H1 (cell line): ENCODE measurements at regions of chr22 and their contacts with region 1.

Region 1: DNA sequence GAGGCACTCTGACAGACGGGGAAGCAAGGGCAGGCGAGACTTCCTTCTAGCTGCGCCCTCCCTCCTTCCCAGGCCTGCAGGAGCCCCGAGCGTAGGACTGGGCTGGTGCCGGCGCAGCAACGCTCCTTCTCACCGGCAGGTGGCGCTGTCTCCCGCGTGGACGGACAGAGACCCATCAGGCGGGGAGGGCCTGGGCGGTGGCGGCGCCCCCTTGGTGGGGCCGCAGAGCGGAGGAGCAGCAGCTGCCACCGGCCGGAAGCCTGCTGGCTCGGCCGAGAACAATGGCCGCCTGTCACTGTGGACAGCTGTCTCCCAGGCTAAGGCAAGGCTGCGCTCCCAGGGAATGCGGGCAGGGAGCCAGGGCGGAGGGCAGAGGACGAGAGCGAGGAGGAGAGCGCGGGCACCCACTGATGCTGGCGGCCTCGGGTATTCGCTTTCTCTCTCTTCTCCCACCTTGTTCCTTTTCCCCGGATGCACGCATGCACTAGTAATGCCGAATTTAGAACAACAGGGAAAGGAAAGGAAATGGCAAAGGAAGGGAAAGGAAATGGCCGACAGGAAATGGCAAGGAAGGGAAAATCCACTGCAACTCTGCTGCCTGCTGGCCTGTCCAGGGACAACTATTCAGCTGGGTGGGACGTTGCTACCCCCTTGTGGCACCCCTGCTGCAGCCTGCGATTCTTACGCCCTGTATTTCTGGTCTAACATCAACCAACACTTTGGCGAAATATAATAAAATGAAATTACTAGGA is 14.4 kb downstream of the PPM1F start:
- DNase-seq: peak; percentile 75 to 99
- H3K4me3 ChIP-seq: peak overlapping the region; percentile 19 to 78 (median 60)
- H3K27ac ChIP-seq: peak overlapping the region; percentile 53; the same call in 1 of the 2 replicates
- H3K4me1 ChIP-seq: peaks cover 0 to 7% (median under 1%) of the 10 kb centered on the region in 4 experiments; a peak in 4 of 7 replicates
- H3K27me3 ChIP-seq: no peaks in the 10 kb centered on the region
- CTCF ChIP-seq: peak; percentile 99
- EP300 ChIP-seq: peak in 1 of 2 experiments; percentile 55; a peak in 1 of 3 replicates
- POLR2A ChIP-seq: no peak
- RAD21 ChIP-seq: peak; percentile 88 to 92

Region 2: DNA sequence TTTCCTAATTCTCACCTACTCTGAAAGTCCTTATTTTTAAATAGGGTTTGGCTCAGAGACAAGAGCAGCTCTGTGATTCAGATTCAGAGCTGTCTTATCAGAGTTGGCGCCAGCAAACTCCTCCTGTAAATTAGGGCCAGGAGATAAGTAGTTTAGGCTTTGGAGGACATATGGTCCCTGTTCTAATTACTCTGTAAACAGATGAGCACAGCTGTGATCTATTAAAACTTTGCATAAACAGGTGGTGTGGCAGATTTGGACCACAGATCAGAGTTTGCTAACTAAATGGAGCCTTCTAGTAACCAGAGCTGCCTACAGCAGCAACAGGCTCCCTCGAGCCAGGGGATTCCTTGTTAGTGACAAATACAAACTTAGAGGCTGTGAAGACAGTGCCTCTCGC is 230.6 kb before region 1 on chr22:
- CTCF ChIA-PET with region 1: interaction called, 11 read pairs
- POLR2A ChIA-PET with region 1: no interaction called
- DNase-seq: no peak
- H3K4me3 ChIP-seq: no peak overlapping the region
- H3K27ac ChIP-seq: no peak overlapping the region
- H3K4me1 ChIP-seq: no peaks in the 10 kb centered on the region
- H3K27me3 ChIP-seq: no peaks in the 10 kb centered on the region
- CTCF ChIP-seq: no peak
- EP300 ChIP-seq: no peak
- POLR2A ChIP-seq: no peak
- RAD21 ChIP-seq: no peak

Region 3: GRCh38 chr22:21771631-21771976 is 166.6 kb before region 1 on chr22:
- CTCF ChIA-PET with region 1: interaction called, 22 read pairs
- POLR2A ChIA-PET with region 1: no interaction called
- DNase-seq: no peak
- H3K4me3 ChIP-seq: no peak overlapping the region
- H3K27ac ChIP-seq: no peak overlapping the region
- H3K4me1 ChIP-seq: no peaks in the 10 kb centered on the region
- H3K27me3 ChIP-seq: no peaks in the 10 kb centered on the region
- CTCF ChIP-seq: no peak
- EP300 ChIP-seq: no peak
- POLR2A ChIP-seq: no peak
- RAD21 ChIP-seq: no peak

Region 4: GRCh38 chr22:21778705-21779363 is 159.4 kb before region 1 on chr22:
- CTCF ChIA-PET with region 1: interaction called, 22 read pairs
- POLR2A ChIA-PET with region 1: no interaction called
- DNase-seq: no peak
- H3K4me3 ChIP-seq: no peak overlapping the region
- H3K27ac ChIP-seq: no peak overlapping the region
- H3K4me1 ChIP-seq: no peaks in the 10 kb centered on the region
- H3K27me3 ChIP-seq: no peaks in the 10 kb centered on the region
- CTCF ChIP-seq: no peak
- EP300 ChIP-seq: no peak
- POLR2A ChIP-seq: no peak
- RAD21 ChIP-seq: no peak

Region 5: GRCh38 chr22:21917181-21917958 is 20.9 kb before region 1 on chr22:
- CTCF ChIA-PET with region 1: interaction called, 59 read pairs
- POLR2A ChIA-PET with region 1: interaction called, 8 read pairs
- DNase-seq: no peak
- H3K4me3 ChIP-seq: no peak overlapping the region
- H3K27ac ChIP-seq: 0 out of 2 replicates have a peak overlapping the region, but pooled peaks have one; percentile 5
- H3K4me1 ChIP-seq: peaks cover 13 to 40% (median 30%) of the 10 kb centered on the region in 4 experiments
- H3K27me3 ChIP-seq: no peaks in the 10 kb centered on the region; a peak in 1 of 7 replicates
- CTCF ChIP-seq: no peak
- EP300 ChIP-seq: no peak
- POLR2A ChIP-seq: no peak
- RAD21 ChIP-seq: peak; percentile 15 to 28; a peak in 2 of 4 replicates

Region 6: GRCh38 chr22:21927174-21927823 is 10.9 kb before region 1 on chr22:
- CTCF ChIA-PET with region 1: interaction called, 59 read pairs
- POLR2A ChIA-PET with region 1: interaction called, 8 read pairs
- DNase-seq: peak in 1 of 2 experiments; percentile 62
- H3K4me3 ChIP-seq: no peak overlapping the region
- H3K27ac ChIP-seq: 0 out of 2 replicates have a peak overlapping the region, but pooled peaks have one; percentile 30
- H3K4me1 ChIP-seq: peaks cover 0 to 33% (median 26%) of the 10 kb centered on the region in 4 experiments; a peak in 6 of 7 replicates
- H3K27me3 ChIP-seq: no peaks in the 10 kb centered on the region
- CTCF ChIP-seq: no peak
- EP300 ChIP-seq: no peak
- POLR2A ChIP-seq: no peak
- RAD21 ChIP-seq: no peak

Region 7: DNA sequence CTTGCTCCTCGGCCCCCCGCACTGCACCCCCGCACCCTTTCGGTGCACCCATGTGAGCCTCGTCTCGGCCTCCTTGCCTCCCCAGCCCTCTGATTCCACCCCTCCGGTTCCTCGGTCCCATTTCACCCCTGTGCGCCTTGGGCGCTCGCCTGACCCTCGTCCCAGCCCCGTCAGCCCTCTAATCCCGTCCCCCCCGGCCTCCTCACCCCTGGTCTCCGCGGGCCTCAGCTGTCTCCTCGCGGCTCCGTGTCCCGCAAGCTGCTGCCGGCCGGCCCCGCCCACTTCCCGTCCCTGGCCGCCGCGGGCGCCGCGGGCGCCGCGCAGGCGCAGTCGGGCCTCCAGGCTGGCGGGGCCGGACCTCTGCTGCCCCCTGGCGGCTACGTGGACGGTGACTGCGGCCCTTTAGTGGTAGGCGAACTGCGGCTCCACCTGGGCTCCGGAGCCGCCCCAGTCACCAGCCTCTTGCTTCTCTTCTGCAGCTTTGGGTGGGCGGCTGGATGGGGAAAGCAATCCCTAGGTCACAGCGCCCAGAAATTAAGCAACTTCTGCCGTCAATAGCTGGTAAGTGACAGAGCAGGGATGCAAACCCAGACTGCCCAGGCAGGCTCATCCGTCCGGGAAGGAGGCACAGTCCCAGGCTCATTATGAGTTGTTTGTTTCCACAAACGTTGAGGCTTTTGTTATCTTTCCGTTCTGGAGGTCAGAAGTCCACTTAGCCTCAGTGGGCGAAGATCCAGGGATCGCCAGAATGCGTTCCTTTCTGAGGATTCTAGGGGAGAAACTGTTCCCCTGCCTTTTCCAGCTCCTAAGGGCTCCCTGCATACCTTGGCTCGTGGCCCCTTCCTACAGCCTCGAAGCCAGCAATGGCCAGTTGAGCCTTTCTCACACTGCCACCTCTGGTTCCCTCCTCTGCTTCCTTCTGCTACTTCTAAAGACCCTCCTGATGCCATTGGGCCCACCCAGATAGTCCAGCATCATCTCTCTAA is 14.6 kb after region 1 on chr22 and contains the start of gene PPM1F:
- CTCF ChIA-PET with region 1: interaction called, 60 read pairs
- POLR2A ChIA-PET with region 1: interaction called, 4 read pairs
- DNase-seq: peak; percentile 46 to 97
- H3K4me3 ChIP-seq: peak within 1 kb of the TSS; percentile 34 to 93 (median 76)
- H3K27ac ChIP-seq: no peak within 1 kb of the TSS
- H3K4me1 ChIP-seq: peaks cover 0 to 3% (median 2%) of the 10 kb centered on the region in 4 experiments; a peak in 4 of 7 replicates
- H3K27me3 ChIP-seq: peaks cover 0 to 17% (median 6%) of the 10 kb centered on the region in 4 experiments; a peak in 4 of 7 replicates
- CTCF ChIP-seq: peak; percentile 90 to 97 (median 91)
- EP300 ChIP-seq: no peak
- POLR2A ChIP-seq: no peak
- RAD21 ChIP-seq: peak; percentile 36 to 71
- total RNA-seq, gene PPM1F: 21.9 and 22.8 TPM in 2 replicates